CD4-positive, alpha-beta T cell (primary cell): ENCODE measurements at regions of chr18 and their contacts with region 1.

Region 1: GRCh38 chr18:42654556-42654955 is 460.9 kb downstream of the RIT2 start:
- DNase-seq: peak in 2 of 14 experiments; percentile 4 to 5
- ATAC-seq: no peak
- H3K4me3 ChIP-seq: no peak overlapping the region
- H3K4me3 Mint-ChIP-seq: no peak overlapping the region
- H3K27ac ChIP-seq: no peak overlapping the region
- H3K27ac Mint-ChIP-seq: no peak overlapping the region
- H3K4me1 ChIP-seq: no peaks in the 10 kb centered on the region
- H3K4me1 Mint-ChIP-seq: no peaks in the 10 kb centered on the region
- H3K27me3 ChIP-seq: no peaks in the 10 kb centered on the region
- H3K27me3 Mint-ChIP-seq: no peaks in the 10 kb centered on the region
- CTCF ChIP-seq: no peak

Region 2: DNA sequence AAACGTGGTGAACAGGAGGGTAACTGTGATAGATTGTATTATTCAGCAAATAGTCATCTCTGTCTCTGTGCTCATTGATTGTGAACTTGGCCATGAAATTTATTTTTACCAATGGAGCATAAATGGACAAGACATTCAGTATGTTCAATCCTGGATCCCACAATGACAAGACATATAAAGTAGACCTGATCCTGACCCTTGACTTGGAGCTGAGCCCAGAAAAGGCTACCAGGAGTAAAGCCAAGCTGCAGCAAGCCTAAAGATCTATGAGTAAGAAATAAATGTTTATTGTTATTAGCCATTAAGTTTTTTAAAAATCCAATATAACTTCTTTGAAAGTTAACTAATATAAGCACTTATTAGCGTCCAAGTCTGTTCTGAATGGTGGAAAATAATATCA is 168.3 kb before region 1 on chr18:
- CTCF ChIA-PET with region 1: no interaction called
- POLR2A ChIA-PET with region 1: no interaction called
- intact Hi-C with region 1: no loop called
- DNase-seq: no peak
- ATAC-seq: no peak
- H3K4me3 ChIP-seq: no peak overlapping the region
- H3K4me3 Mint-ChIP-seq: no peak overlapping the region
- H3K27ac ChIP-seq: no peak overlapping the region
- H3K27ac Mint-ChIP-seq: no peak overlapping the region
- H3K4me1 ChIP-seq: no peaks in the 10 kb centered on the region
- H3K4me1 Mint-ChIP-seq: no peaks in the 10 kb centered on the region
- H3K27me3 ChIP-seq: no peaks in the 10 kb centered on the region
- H3K27me3 Mint-ChIP-seq: no peaks in the 10 kb centered on the region
- CTCF ChIP-seq: no peak

Region 3: GRCh38 chr18:42623935-42624334 is 30.6 kb before region 1 on chr18:
- CTCF ChIA-PET with region 1: no interaction called
- POLR2A ChIA-PET with region 1: no interaction called
- intact Hi-C with region 1: loop called in 1 of 2 experiments (anchors 1 kb)
- DNase-seq: no peak
- ATAC-seq: no peak
- H3K4me3 ChIP-seq: no peak overlapping the region
- H3K4me3 Mint-ChIP-seq: no peak overlapping the region
- H3K27ac ChIP-seq: no peak overlapping the region
- H3K27ac Mint-ChIP-seq: no peak overlapping the region
- H3K4me1 ChIP-seq: no peaks in the 10 kb centered on the region
- H3K4me1 Mint-ChIP-seq: no peaks in the 10 kb centered on the region
- H3K27me3 ChIP-seq: no peaks in the 10 kb centered on the region
- H3K27me3 Mint-ChIP-seq: no peaks in the 10 kb centered on the region
- CTCF ChIP-seq: no peak

Region 4: GRCh38 chr18:42675810-42676209 is 21.3 kb after region 1 on chr18:
- CTCF ChIA-PET with region 1: no interaction called
- POLR2A ChIA-PET with region 1: no interaction called
- intact Hi-C with region 1: no loop called
- DNase-seq: no peak
- ATAC-seq: no peak
- H3K4me3 ChIP-seq: no peak overlapping the region
- H3K4me3 Mint-ChIP-seq: no peak overlapping the region
- H3K27ac ChIP-seq: no peak overlapping the region
- H3K27ac Mint-ChIP-seq: no peak overlapping the region
- H3K4me1 ChIP-seq: no peaks in the 10 kb centered on the region
- H3K4me1 Mint-ChIP-seq: no peaks in the 10 kb centered on the region
- H3K27me3 ChIP-seq: no peaks in the 10 kb centered on the region
- H3K27me3 Mint-ChIP-seq: no peaks in the 10 kb centered on the region
- CTCF ChIP-seq: no peak

Region 5: GRCh38 chr18:43175257-43175656 is 520.7 kb after region 1 on chr18:
- CTCF ChIA-PET with region 1: no interaction called
- POLR2A ChIA-PET with region 1: no interaction called
- intact Hi-C with region 1: no loop called
- DNase-seq: no peak
- ATAC-seq: no peak
- H3K4me3 ChIP-seq: no peak overlapping the region
- H3K4me3 Mint-ChIP-seq: no peak overlapping the region
- H3K27ac ChIP-seq: no peak overlapping the region
- H3K27ac Mint-ChIP-seq: no peak overlapping the region
- H3K4me1 ChIP-seq: no peaks in the 10 kb centered on the region
- H3K4me1 Mint-ChIP-seq: no peaks in the 10 kb centered on the region
- H3K27me3 ChIP-seq: no peaks in the 10 kb centered on the region
- H3K27me3 Mint-ChIP-seq: no peaks in the 10 kb centered on the region
- CTCF ChIP-seq: no peak